Right ventricle myocardium inferior (tissue), 1 donor: ENCODE measurements at regions of chr14 and their contacts with region 1.

Region 1: DNA sequence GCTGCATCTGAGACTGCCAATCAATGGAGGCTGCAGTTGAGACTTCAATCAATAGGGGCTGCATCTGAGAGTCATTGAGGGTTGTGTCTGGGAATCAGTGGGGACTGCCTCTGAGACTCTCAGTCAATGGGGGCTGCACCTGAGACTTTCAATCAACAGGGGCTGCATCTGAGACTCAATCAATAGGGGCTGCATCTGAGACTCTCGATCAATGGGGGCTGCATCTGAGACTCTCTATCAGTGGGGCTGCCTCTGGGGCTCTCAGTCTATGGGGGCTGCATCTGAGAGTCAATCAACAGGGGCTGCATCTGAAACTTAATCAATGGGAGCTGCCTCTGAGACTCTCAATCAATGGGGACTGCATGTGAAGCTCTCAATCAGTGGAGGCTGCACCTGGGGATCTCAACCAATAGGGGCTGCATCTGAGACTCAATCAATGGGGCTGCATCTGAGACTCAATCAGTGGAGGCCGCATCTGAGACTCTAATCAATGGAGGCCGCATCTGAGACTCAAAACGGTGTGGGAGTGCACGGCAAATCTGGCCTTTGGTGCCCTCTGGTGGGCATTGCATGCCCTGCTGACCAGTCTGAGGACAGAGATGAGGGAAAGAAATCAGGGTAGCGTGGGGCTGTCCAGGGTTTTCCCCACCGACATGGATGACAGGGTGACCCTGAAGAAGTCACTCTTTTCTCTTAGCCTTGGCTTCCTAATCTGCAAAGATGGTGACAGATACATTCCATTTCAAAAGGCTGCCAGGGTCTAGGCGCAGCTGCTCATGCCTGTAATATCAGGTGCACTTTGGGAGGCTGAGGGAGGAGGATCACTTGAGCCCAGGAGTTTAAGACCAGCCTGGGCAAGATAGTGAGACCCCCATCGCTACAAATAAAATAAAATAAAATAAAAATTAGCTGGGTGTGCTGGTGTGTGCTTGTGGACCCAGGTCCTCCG is 41.3 kb upstream of the EIF5 start:
- DNase-seq: peak; percentile 77
- ATAC-seq: peak; percentile 89

Region 2: GRCh38 chr14:103078093-103078749 is 214.5 kb before region 1 on chr14:
- intact Hi-C with region 1: loop called (anchors 2 kb)
- DNase-seq: peak; percentile 91
- ATAC-seq: no peak

Region 3: DNA sequence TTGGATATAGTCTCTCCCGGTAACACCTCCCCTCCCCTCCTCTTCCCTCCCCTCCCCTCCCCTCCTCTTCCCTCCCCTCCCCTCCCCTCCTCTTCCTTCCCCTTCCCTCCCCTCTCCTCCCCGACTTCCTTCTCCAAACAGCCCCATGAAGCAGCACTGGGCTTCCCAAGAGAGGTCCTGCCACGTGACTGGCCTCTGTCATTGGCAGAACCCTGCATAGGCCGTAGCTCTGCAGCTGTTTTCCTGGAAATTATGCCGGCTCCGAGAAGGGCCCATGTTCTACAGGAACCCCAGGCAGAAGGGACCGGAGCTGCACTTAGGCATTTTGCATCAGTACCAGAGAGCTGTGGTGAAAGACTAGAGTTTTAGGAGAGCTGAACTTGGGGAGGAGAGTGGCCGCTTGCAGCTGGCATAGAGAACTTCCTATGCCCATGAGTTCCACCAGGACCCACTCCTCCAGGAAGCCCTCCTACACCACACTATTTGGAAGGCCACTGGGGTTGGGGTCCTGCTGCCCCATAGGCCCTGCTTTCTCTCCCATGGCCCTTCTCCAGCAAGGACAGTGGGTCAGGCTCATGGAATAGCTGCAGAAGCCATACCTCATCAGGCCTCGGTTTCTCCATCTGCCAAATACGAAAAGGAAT is 174.6 kb before region 1 on chr14:
- intact Hi-C with region 1: no loop called
- DNase-seq: peak; percentile 92
- ATAC-seq: peak; percentile 49

Region 4: DNA sequence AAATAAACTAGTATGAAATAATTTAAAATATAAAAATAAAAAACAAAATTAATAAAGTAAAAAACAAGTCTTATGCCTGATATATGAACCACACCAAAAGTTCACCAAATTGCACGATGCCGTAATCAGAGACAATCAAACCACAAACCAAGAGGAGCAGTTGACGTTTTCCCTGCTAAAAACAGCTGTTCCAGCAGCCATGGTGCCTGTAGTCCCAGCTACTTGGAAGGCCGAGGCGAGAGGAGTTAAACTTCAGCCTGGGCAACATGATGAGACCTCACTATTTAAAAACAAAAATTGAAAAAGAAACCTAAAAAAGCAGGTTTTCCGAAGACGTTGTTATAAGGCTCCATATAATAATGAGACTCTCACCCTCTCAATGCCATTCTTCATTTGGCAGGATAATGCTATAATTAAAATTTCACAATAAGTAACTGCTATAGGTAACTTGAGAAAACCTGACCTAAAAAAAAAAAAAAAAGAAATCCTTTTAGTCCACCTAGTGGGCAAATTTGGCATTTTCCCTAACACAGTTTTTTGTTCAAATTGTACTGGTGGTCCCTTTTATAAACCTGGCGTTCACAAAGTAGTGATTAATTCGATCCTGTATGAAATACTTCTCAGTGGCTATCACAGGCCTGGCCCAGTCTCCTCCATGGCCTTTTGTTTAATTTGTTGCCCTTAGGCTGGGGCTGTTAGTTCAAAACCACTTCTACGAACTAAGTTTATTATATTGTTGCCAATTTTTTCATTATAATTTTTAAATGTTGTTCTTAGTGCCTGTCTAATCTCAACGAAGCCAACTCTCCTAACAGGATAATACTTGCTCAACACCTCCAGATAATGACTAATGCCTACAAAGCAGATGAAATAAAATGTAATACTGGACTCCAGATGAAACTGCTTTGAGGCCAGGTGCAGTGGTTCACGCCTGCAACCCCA is 107.4 kb before region 1 on chr14:
- intact Hi-C with region 1: loop called (anchors 1 kb)
- DNase-seq: no peak
- ATAC-seq: no peak

Region 5: DNA sequence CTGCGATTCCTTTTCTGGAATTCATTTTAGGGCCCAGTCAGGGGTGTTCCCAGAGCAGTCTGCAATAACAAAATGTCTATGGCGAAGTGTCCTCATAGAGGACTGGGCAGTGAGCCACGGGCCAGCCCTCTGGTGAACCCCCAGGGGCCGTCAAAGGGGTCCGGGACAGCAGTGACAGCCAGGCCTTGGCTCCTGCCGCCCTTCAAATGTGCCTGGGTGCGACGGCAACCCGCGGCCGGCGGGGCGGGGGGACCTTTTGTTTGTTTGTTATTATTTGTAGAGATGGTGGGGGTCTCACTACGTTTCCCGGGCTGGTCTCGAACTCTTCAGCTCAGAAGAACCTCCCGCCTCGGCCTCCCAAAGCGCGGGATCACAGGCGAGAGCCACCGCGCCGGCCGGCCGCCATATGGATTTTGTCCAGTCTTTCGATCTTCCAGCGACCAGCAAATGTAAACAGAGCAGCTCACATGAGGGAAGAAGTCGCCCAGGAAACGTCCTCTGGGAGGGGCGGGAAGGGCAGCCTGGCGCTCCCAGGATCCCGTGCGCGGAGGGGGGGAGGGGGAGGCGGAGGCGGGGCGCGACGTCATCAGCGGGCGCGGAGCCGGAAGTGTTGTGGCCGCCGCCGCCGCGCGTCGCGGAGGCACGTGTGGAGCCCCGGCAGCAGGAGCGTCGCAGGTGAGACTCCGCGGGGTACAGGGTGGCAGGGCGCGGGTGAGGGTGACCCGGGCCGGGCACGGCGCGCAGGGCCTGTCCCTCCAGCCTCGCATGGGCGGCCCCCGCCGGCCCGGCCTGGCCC is 236.1 kb after region 1 on chr14 and contains the start of gene TRMT61A:
- intact Hi-C with region 1: no loop called
- DNase-seq: peak; percentile 94
- ATAC-seq: peak; percentile 91
- total RNA-seq, gene TRMT61A: 5.6 TPM